Activated naive CD4-positive, alpha-beta T cell treated with anti-CD3 and anti-CD28 coated beads, Interleukin-2, amount 10 ng/mL, durations not matched to agents 7 days and 5 days (primary cell): ENCODE measurements at regions of chr14 and their contacts with region 1.

Region 1: GRCh38 chr14:23120541-23121251 is 1.6 kb upstream of the CEBPE start:
- DNase-seq: peak; percentile 89
- H3K4me3 Mint-ChIP-seq: peak overlapping the region; percentile 38
- H3K27ac Mint-ChIP-seq: peak overlapping the region; percentile 98
- H3K4me1 Mint-ChIP-seq: peaks cover 37% of the 10 kb centered on the region
- H3K27me3 Mint-ChIP-seq: peaks cover 22% of the 10 kb centered on the region

Region 2: DNA sequence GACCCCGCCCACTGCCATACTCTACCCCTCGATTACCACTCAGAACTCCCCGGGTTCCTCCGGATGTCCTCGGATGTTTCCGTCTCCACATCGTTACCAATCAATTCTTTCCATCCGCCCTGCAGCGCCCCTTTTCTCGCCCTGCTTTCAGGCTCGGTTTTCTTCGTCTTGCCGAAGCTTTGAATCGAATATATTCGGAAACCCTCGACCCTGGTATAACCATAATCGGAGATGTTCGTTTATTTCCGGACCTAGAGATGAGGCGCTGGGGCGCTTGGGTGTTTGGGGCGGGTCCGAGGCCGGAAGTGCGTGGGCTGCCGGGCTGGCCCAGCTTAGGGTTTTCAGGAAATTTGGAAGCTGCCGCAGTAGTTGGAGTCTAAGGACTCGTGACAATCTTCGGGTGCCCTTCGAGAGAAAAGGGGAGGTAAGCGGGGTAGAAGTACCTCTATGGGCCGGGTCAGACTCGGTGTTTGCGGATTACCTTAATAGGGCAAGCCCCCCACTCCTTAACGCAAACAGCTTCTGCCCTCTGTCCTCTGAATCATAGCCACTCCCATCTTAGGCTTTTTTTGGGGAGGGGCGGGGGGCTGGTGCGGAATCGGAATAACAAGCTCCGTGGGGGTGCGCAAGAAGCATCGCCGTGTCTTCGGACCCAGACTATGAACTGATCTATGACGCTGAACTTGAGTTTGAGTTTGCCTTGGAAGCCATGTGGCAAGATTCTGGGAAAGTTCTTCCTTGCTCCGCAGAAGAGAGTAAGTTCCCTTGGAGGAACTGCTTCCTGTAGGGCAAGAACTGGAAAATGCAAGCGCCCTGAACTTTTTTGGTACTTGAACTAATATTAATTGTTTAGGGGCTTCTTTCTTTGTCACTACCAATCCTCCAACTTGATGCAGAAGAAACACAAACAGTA is 25.2 kb before region 1 on chr14 and contains the start of gene C14orf119:
- CTCF ChIA-PET with region 1: interaction called, 16 read pairs
- DNase-seq: peak; percentile 100
- H3K4me3 Mint-ChIP-seq: no peak within 1 kb of the TSS
- H3K27ac Mint-ChIP-seq: no peak within 1 kb of the TSS
- H3K4me1 Mint-ChIP-seq: peaks cover 30% of the 10 kb centered on the region
- H3K27me3 Mint-ChIP-seq: no peaks in the 10 kb centered on the region

Region 3: GRCh38 chr14:23160924-23161538 is 40.3 kb after region 1 on chr14:
- CTCF ChIA-PET with region 1: interaction called, 10 read pairs
- DNase-seq: no peak
- H3K4me3 Mint-ChIP-seq: no peak overlapping the region
- H3K27ac Mint-ChIP-seq: no peak overlapping the region
- H3K4me1 Mint-ChIP-seq: peaks cover 24% of the 10 kb centered on the region
- H3K27me3 Mint-ChIP-seq: peaks cover 22% of the 10 kb centered on the region

Region 4: DNA sequence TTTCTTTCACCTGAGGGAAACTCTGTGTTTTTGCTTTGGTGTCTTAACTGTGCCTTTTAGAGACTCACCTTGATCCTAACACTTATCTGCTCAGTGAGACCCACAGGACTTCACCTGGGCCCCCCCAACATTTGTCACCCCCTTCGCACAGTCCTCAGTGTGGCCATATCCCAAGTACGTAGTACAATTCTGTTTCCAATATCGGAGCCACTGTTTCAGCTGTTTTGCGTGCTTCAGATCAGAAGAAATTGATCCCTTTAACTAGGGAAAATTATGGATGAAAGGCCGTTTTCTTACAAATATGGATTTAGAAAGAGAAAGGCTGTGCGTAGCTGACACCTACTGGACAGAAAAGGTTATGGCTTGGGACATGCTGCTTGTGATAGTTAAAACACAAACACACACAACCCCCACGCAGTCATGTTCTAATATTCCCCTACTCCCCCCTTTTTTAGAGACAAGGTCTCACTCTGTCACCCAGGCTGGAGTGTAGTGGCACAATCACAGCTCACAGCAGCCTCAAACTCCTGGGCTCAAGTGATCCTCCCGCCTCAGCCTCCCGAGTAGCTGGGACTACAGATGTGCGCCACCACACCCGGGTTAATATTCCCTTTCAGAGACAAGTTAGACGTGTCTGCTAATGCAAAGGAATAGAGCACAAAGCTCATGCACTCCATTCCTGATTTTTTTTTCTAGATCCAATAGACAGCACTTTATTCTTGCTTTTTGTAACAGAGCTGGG is 66.4 kb after region 1 on chr14:
- CTCF ChIA-PET with region 1: interaction called, 264 read pairs
- DNase-seq: peak; percentile 51
- H3K4me3 Mint-ChIP-seq: no peak overlapping the region
- H3K27ac Mint-ChIP-seq: no peak overlapping the region
- H3K4me1 Mint-ChIP-seq: no peaks in the 10 kb centered on the region
- H3K27me3 Mint-ChIP-seq: peaks cover 14% of the 10 kb centered on the region

Region 5: DNA sequence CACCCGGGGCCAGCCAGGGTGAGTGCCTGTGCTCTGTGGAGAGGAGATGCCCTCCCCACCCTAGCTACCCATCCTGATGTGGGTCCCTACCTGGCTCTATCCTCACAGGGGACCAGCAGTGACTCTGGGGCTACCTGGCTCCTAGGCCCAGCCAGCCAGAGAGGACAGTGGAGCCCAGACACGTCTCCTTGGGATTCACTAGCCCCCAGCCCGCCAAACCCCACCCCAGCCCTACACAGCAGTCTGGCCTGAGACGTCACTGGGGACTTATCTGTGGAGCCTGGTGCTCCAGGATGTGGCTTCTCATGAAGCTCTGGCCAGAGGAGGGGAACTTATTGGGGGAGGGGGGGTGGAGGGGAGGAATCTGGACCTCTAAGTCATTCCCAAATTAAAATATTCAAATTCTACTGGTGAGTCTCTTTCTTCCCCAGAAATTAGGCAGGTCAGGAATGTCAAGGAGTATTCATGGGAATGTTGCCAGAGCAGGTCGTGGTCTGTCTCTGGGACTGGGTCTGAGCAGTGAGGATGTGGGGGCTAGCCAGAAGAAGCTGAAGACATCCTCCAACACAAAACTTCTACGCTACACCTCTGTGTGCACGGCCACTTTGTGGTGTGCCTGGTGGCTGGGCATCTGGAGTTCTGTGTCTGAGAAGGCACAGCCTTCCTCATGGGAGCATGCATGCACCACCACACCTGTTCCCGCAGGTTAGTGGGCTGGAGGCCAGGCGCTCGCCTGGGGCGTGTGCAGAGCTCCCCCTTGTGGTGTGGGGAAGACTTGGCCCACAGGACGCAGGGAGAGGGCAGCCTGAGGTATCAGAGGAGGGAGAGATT is 258.9 kb after region 1 on chr14:
- CTCF ChIA-PET with region 1: interaction called, 13 read pairs
- DNase-seq: peak; percentile 76
- H3K4me3 Mint-ChIP-seq: no peak overlapping the region
- H3K27ac Mint-ChIP-seq: no peak overlapping the region
- H3K4me1 Mint-ChIP-seq: no peaks in the 10 kb centered on the region
- H3K27me3 Mint-ChIP-seq: peaks cover 58% of the 10 kb centered on the region

Region 6: GRCh38 chr14:23670481-23670880 is 549.8 kb after region 1 on chr14:
- CTCF ChIA-PET with region 1: no interaction called
- DNase-seq: no peak
- H3K4me3 Mint-ChIP-seq: no peak overlapping the region
- H3K27ac Mint-ChIP-seq: no peak overlapping the region
- H3K4me1 Mint-ChIP-seq: no peaks in the 10 kb centered on the region
- H3K27me3 Mint-ChIP-seq: peaks cover 7% of the 10 kb centered on the region